Esophagus muscularis mucosa (tissue), 4 donors: ENCODE measurements at regions of chr18 and their contacts with region 1.

Region 1: GRCh38 chr18:63155169-63155852 is 164.3 kb downstream of the BCL2 start:
- DNase-seq: no peak
- H3K4me3 ChIP-seq: peak overlapping the region in 3 of 4 donors; percentile 6 to 46 (median 23)
- H3K27ac ChIP-seq: no peak overlapping the region
- H3K4me1 ChIP-seq: peaks cover 11 to 41% (median 38%) of the 10 kb centered on the region in 4 donors
- H3K27me3 ChIP-seq: no peaks in the 10 kb centered on the region
- CTCF ChIP-seq: peak; percentile 46 to 72 (median 58)
- EP300 ChIP-seq: no peak
- POLR2A ChIP-seq: no peak

Region 2: GRCh38 chr18:63249771-63250170 is 94.5 kb after region 1 on chr18:
- intact Hi-C with region 1: loop called (anchors 5 kb)
- DNase-seq: peak; percentile 91
- H3K4me3 ChIP-seq: no peak overlapping the region
- H3K27ac ChIP-seq: peak overlapping the region in 1 of 4 donors; percentile 30
- H3K4me1 ChIP-seq: peaks cover 0 to 57% (median 52%) of the 10 kb centered on the region in 4 donors
- H3K27me3 ChIP-seq: no peaks in the 10 kb centered on the region
- CTCF ChIP-seq: no peak
- EP300 ChIP-seq: no peak
- POLR2A ChIP-seq: no peak